ENCODE measurements at regions of chr15 and their contacts with region 1.

Region 1: GRCh38 chr15:28123408-28124023 is 24.4 kb upstream of the OCA2 start:
- DNase-seq: peak; percentile 75
- H3K4me3 Mint-ChIP-seq: no peak overlapping the region
- H3K27ac Mint-ChIP-seq: no peak overlapping the region
- H3K4me1 Mint-ChIP-seq: peaks cover 5% of the 10 kb centered on the region
- H3K27me3 Mint-ChIP-seq: no peaks in the 10 kb centered on the region
- CTCF ChIP-seq: peak; percentile 71

Region 2: DNA sequence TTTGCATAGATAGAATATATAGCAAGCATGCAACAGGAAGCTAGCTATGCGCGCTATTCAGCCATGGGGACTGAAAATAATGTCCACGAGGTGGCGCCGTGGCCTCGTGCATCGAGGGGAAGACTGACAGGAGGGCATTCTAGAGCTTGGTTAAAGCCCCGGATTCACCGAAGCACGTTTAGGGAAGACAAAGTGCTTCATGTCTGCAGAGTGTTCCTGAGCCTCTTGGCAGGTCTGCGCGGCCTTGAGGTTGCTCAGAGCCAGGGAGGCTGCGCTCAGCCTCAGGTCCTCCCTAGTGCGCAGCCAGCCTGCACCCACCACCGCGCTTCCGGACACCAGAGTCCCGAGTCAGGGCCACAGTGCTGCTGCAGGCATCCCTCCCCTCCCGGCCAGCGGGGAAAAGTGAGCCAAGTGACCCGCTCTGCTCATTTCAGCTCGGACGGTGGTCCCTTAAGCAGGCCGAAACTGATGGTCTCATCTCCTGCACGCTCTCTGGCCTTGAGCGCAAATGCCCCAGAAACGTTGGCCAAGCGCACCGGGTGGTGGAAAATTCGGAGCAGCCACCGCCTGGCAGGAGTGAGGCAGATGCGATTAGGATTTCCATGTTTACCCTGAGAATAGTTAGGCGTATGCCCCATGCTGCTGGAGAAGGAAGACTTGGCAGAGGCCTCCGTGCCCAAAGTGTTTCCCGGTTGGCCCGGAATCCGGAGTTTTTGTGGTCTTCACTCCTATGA is 1231.9 kb before region 1 on chr15:
- CTCF ChIA-PET with region 1: interaction called, 18 read pairs
- POLR2A ChIA-PET with region 1: no interaction called
- intact Hi-C with region 1: loop called (anchors 1 kb)
- DNase-seq: peak; percentile 5
- H3K4me3 Mint-ChIP-seq: no peak overlapping the region
- H3K27ac Mint-ChIP-seq: no peak overlapping the region
- H3K4me1 Mint-ChIP-seq: no peaks in the 10 kb centered on the region
- H3K27me3 Mint-ChIP-seq: no peaks in the 10 kb centered on the region
- CTCF ChIP-seq: peak; percentile 15

Region 3: GRCh38 chr15:28147801-28148200 is 24.3 kb after region 1 on chr15:
- CTCF ChIA-PET with region 1: interaction called, 24 read pairs
- POLR2A ChIA-PET with region 1: no interaction called
- intact Hi-C with region 1: no loop called
- DNase-seq: no peak
- H3K4me3 Mint-ChIP-seq: no peak overlapping the region
- H3K27ac Mint-ChIP-seq: no peak overlapping the region
- H3K4me1 Mint-ChIP-seq: no peaks in the 10 kb centered on the region
- H3K27me3 Mint-ChIP-seq: no peaks in the 10 kb centered on the region
- CTCF ChIP-seq: no peak

Region 4: GRCh38 chr15:28975766-28976179 is 852.3 kb after region 1 on chr15:
- CTCF ChIA-PET with region 1: no interaction called
- POLR2A ChIA-PET with region 1: no interaction called
- intact Hi-C with region 1: loop called (anchors 10 kb)
- DNase-seq: peak; percentile 54
- H3K4me3 Mint-ChIP-seq: no peak overlapping the region
- H3K27ac Mint-ChIP-seq: no peak overlapping the region
- H3K4me1 Mint-ChIP-seq: peaks cover 10% of the 10 kb centered on the region
- H3K27me3 Mint-ChIP-seq: peaks cover 43% of the 10 kb centered on the region
- CTCF ChIP-seq: peak; percentile 45

Region 5: GRCh38 chr15:29269485-29270168 is 1146.1 kb after region 1 on chr15 and contains the start of gene NSMCE3:
- CTCF ChIA-PET with region 1: interaction called, 3 read pairs
- POLR2A ChIA-PET with region 1: no interaction called
- intact Hi-C with region 1: loop called (anchors 5 kb)
- DNase-seq: peak; percentile 78
- H3K4me3 Mint-ChIP-seq: peak within 1 kb of the TSS; percentile 93
- H3K27ac Mint-ChIP-seq: peak within 1 kb of the TSS; percentile 89
- H3K4me1 Mint-ChIP-seq: peaks cover 26% of the 10 kb centered on the region
- H3K27me3 Mint-ChIP-seq: no peaks in the 10 kb centered on the region
- CTCF ChIP-seq: no peak
- total RNA-seq, gene NSMCE3: 6.7 and 9.1 TPM in 2 replicates

Measured in MCF 10A (cell line).